ENCODE measurements at regions of chr3 and their contacts with region 1.

Region 1: GRCh38 chr3:188000361-188000861 is 153.5 kb upstream of the LPP start:
- DNase-seq: no peak
- ATAC-seq: peak; percentile 17
- H3K4me3 ChIP-seq: no peak overlapping the region
- H3K27ac ChIP-seq: peak overlapping the region; percentile 90
- H3K4me1 ChIP-seq: peaks cover 99% of the 10 kb centered on the region
- H3K27me3 ChIP-seq: no peaks in the 10 kb centered on the region
- CTCF ChIP-seq: peak; percentile 32; the same call in 1 of the 2 replicates
- EP300 ChIP-seq: peak in 1 of 2 experiments; percentile 53; a peak in 1 of 4 replicates
- POLR2A ChIP-seq: no peak
- RAD21 ChIP-seq: no peak

Region 2: DNA sequence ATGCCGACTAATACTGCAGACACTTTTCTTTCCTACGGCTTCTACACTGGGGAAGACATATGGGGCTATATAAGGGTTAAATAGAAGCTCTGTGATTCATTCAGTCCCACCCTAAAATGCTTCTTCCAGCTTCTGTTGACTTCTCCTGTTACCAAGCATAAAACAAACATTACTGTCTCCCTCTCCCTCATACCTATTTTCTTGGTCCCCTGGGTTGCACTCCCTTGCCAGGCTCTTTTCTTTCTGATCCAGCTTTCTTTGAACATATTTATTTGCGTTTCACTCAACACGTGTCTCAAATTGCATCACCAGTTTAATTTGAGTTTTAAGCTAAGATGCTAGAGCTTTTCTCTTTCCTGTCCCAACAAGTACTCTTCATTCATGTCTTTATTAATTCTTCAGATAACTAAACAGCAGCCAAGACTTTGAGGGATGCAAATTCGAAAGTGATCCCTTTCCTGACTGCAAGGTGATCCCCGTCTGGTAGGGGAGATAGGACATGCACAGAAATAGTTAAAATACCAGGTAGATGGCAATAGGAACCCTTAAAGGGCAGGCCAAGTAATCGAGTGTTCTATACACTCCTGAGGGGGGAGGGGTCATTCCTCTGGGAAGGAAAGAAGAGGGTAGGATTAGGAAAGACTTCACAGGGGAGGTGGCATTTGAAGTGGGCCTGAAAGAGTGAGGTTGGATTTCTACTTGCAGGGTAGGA is 56.6 kb before region 1 on chr3:
- CTCF ChIA-PET with region 1: no interaction called
- POLR2A ChIA-PET with region 1: interaction called, 9 read pairs
- in situ Hi-C with region 1: no loop called
- intact Hi-C with region 1: loop called (anchors 2 kb)
- DNase-seq: peak; percentile 22
- ATAC-seq: peak; percentile 50
- H3K4me3 ChIP-seq: no peak overlapping the region
- H3K27ac ChIP-seq: no peak overlapping the region
- H3K4me1 ChIP-seq: peaks cover 78% of the 10 kb centered on the region
- H3K27me3 ChIP-seq: peaks cover 0 to 3% of the 10 kb centered on the region in 2 experiments; a peak in 1 of 5 replicates
- CTCF ChIP-seq: no peak
- EP300 ChIP-seq: peak in 1 of 2 experiments; percentile 53; a peak in 1 of 4 replicates
- POLR2A ChIP-seq: no peak
- RAD21 ChIP-seq: no peak

Region 3: GRCh38 chr3:187983484-187984124 is 16.8 kb before region 1 on chr3:
- CTCF ChIA-PET with region 1: no interaction called
- POLR2A ChIA-PET with region 1: interaction called, 31 read pairs
- in situ Hi-C with region 1: no loop called
- intact Hi-C with region 1: loop called (anchors 1 kb)
- DNase-seq: peak; percentile 93
- ATAC-seq: peak; percentile 92
- H3K4me3 ChIP-seq: peak overlapping the region in 2 of 3 experiments; percentile 15 to 29; a peak in 2 of 6 replicates
- H3K27ac ChIP-seq: peak overlapping the region; percentile 70
- H3K4me1 ChIP-seq: peaks cover 62% of the 10 kb centered on the region
- H3K27me3 ChIP-seq: no peaks in the 10 kb centered on the region
- CTCF ChIP-seq: peak; percentile 56
- EP300 ChIP-seq: peak; percentile 38 to 60; a peak in 3 of 4 replicates
- POLR2A ChIP-seq: no peak
- RAD21 ChIP-seq: peak; percentile 32; the same call in 1 of the 2 replicates

Region 4: GRCh38 chr3:188052169-188053030 is 52.0 kb after region 1 on chr3:
- CTCF ChIA-PET with region 1: no interaction called
- POLR2A ChIA-PET with region 1: interaction called, 22 read pairs
- in situ Hi-C with region 1: no loop called
- intact Hi-C with region 1: no loop called
- DNase-seq: peak; percentile 90
- ATAC-seq: peak; percentile 96
- H3K4me3 ChIP-seq: peak overlapping the region; percentile 10 to 51 (median 26); a peak in 4 of 6 replicates
- H3K27ac ChIP-seq: peak overlapping the region; percentile 72
- H3K4me1 ChIP-seq: peaks cover 76% of the 10 kb centered on the region
- H3K27me3 ChIP-seq: no peaks in the 10 kb centered on the region
- CTCF ChIP-seq: peak; percentile 86
- EP300 ChIP-seq: peak; percentile 62 to 71
- POLR2A ChIP-seq: peak; percentile 54 to 55; a peak in 2 of 4 replicates
- RAD21 ChIP-seq: peak; percentile 76

Region 5: GRCh38 chr3:188076176-188076575 is 75.8 kb after region 1 on chr3:
- CTCF ChIA-PET with region 1: no interaction called
- POLR2A ChIA-PET with region 1: no interaction called
- in situ Hi-C with region 1: no loop called
- intact Hi-C with region 1: no loop called
- DNase-seq: no peak
- ATAC-seq: no peak
- H3K4me3 ChIP-seq: no peak overlapping the region
- H3K27ac ChIP-seq: no peak overlapping the region
- H3K4me1 ChIP-seq: peaks cover 13% of the 10 kb centered on the region
- H3K27me3 ChIP-seq: no peaks in the 10 kb centered on the region; a peak in 1 of 5 replicates
- CTCF ChIP-seq: no peak
- EP300 ChIP-seq: no peak
- POLR2A ChIP-seq: no peak
- RAD21 ChIP-seq: no peak

Region 6: DNA sequence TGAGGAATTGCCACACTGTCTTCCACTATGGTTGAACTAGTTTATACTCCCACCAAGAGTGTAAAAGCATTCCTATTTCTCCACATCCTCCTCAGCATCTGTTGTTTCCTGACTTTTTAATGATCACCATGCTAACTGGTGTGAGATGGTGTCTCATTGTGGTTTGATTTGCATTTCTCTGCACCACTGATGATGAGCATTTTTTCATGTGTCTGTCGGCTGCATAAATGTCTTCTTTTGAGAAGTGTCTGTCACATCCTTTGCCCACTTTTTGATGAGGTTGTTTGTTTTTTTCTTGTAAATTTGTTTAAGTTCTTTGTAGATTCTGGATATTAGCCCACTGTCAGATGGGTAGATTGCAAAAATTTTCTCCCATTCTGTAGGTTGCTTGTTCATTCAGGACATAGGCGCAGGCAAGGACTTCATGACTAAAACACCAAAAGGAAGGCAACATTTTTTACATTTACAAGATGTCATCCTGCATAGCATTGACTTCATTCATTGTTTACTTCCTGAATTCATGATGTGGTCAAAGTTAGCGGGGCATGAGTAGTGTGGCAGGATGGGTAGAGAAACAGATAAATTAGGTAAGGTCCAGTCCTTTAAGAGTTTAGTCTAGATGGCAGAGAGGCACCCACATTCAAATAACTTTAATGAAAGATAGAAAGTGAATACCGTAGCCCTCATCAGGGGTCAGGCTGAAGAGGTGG is 108.4 kb after region 1 on chr3:
- CTCF ChIA-PET with region 1: no interaction called
- POLR2A ChIA-PET with region 1: no interaction called
- in situ Hi-C with region 1: no loop called
- intact Hi-C with region 1: no loop called
- DNase-seq: no peak
- ATAC-seq: no peak
- H3K4me3 ChIP-seq: no peak overlapping the region
- H3K27ac ChIP-seq: no peak overlapping the region
- H3K4me1 ChIP-seq: peaks cover 50% of the 10 kb centered on the region
- H3K27me3 ChIP-seq: no peaks in the 10 kb centered on the region
- CTCF ChIP-seq: no peak
- EP300 ChIP-seq: no peak
- POLR2A ChIP-seq: no peak
- RAD21 ChIP-seq: no peak

Region 7: DNA sequence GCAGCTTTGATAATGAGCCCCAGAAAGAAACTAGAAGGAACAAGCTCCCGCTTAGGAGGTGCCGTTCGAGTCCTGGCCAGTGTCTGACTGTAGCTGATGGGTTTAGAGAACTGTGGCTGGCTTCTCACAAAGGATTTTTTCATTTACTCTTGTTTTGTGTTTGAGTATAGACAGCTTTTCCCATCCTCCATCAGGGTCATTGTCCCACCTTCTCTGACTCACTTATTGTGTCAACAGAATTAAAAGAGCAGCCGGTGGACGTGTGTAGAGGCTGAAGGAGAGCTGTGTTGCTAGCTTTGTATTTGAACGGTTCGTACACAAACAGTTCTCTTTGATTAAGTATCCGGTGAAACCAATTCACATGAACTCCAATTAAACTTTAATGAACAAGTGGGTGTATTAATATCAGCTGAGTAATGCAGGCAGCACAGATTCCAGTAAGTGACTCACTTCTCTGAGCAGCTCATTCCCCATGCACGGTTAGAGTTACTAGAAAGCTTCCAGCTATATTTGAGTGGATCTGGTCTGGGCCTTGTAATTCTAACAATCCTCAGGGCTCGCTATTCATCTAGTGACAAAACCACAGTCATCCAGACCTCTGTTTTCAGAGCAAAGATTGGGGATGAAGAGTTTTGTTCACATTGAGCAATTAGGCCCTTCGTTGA is 294.5 kb after region 1 on chr3:
- CTCF ChIA-PET with region 1: no interaction called
- POLR2A ChIA-PET with region 1: interaction called, 13 read pairs
- in situ Hi-C with region 1: no loop called
- intact Hi-C with region 1: loop called (anchors 2 kb)
- DNase-seq: peak; percentile 99
- ATAC-seq: peak; percentile 90
- H3K4me3 ChIP-seq: peak overlapping the region in 1 of 3 experiments; percentile 45; a peak in 2 of 6 replicates
- H3K27ac ChIP-seq: peak overlapping the region; percentile 94
- H3K4me1 ChIP-seq: peaks cover 99% of the 10 kb centered on the region
- H3K27me3 ChIP-seq: no peaks in the 10 kb centered on the region
- CTCF ChIP-seq: no peak
- EP300 ChIP-seq: peak; percentile 90 to 96; a peak in 3 of 4 replicates
- POLR2A ChIP-seq: peak; percentile 48 to 74; a peak in 3 of 4 replicates
- RAD21 ChIP-seq: peak; percentile 37; the same call in 1 of the 2 replicates

Measured in HepG2 (cell line).